Naive thymus-derived CD4-positive, alpha-beta T cell (primary cell): ENCODE measurements at regions of chr1 and their contacts with region 1.

Region 1: GRCh38 chr1:93629099-93630059 is 52.3 kb downstream of the BCAR3 start:
- DNase-seq: peak in 8 of 9 donors; percentile 22 to 69 (median 56)
- ATAC-seq: peak; percentile 89
- H3K4me3 ChIP-seq: no peak overlapping the region
- H3K4me3 Mint-ChIP-seq: no peak overlapping the region
- H3K27ac ChIP-seq: no peak overlapping the region
- H3K27ac Mint-ChIP-seq: no peak overlapping the region
- H3K4me1 ChIP-seq: no peaks in the 10 kb centered on the region
- H3K4me1 Mint-ChIP-seq: no peaks in the 10 kb centered on the region
- H3K27me3 ChIP-seq: no peaks in the 10 kb centered on the region
- H3K27me3 Mint-ChIP-seq: peaks cover 0 to 10% (median 0%) of the 10 kb centered on the region in 5 donors

Region 2: DNA sequence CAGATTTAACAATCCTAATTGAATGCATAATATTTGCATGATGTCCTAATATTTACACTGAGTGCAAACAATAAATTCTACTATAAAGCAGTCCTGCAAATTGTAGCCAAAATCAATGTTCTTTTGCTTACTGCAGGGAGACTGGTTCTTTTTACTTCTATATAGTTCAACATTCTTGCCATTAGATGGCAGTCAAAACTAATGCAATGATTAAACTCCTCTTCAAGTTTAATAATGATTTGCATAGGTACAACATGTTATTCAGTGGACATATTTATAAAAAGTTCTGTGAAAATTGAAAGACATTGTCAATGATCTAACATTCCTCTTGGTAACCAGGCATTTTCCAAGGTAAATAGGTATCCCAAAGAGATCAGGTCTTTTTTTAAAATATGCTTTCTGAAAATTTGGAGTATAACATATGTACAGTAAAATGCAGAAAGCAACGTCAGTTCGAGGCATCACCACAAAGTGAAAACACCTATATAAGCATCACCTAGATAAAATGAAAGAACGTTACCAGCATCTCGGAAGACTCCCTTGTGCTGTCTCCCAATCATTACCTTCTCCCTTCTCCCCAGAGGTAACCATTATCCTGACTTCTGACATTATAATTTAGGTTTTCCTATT is 191.3 kb before region 1 on chr1:
- CTCF ChIA-PET with region 1: interaction called, 3 read pairs
- POLR2A ChIA-PET with region 1: no interaction called
- intact Hi-C with region 1: loop called in 1 of 2 experiments (anchors 1 kb)
- DNase-seq: peak in 5 of 9 donors; percentile 24 to 48 (median 27)
- ATAC-seq: peak; percentile 61
- H3K4me3 ChIP-seq: no peak overlapping the region
- H3K4me3 Mint-ChIP-seq: no peak overlapping the region
- H3K27ac ChIP-seq: no peak overlapping the region
- H3K27ac Mint-ChIP-seq: no peak overlapping the region
- H3K4me1 ChIP-seq: no peaks in the 10 kb centered on the region
- H3K4me1 Mint-ChIP-seq: peaks cover 0 to 2% (median 0%) of the 10 kb centered on the region in 7 donors
- H3K27me3 ChIP-seq: peaks cover 0 to 4% of the 10 kb centered on the region in 2 donors
- H3K27me3 Mint-ChIP-seq: peaks cover 0 to 35% (median 7%) of the 10 kb centered on the region in 5 donors

Region 3: DNA sequence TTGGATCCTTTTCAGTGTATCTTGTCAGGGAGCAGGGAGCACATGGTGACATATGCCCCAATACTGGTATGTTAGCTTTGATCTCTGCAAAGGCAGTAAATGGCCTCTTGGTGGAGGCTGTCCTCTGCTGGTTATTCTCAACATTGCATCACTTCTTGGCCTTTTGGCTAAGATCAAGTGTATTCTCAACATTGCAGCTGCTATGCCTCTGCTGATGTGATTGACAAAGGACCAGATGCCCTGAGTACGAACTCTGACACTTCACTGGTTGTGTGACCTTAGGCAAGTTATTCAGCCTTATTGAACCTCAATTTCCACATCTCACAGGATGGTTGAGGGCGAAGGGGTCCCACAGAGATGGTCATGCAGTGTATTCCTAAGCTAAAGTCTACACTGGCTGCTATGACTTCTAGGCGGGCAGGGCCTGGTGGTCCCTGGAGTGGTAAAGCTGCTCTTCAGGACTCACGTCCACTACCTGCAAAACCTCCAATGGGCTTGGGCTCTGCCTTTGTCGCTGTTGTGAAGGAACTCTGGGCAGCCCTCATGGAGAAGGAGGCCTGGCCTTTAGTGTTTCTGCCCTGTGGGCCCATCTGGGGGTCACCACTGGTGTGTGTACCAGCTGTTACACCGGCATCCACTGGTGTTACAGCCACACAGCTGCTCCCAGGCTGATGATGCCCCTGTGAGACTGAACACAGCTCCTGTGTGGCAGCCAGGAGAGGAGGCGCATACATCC is 184.8 kb after region 1 on chr1:
- CTCF ChIA-PET with region 1: interaction called, 3 read pairs
- POLR2A ChIA-PET with region 1: no interaction called
- intact Hi-C with region 1: loop called (anchors 1 kb)
- DNase-seq: peak in 8 of 9 donors; percentile 18 to 55 (median 36)
- ATAC-seq: peak; percentile 70
- H3K4me3 ChIP-seq: no peak overlapping the region
- H3K4me3 Mint-ChIP-seq: no peak overlapping the region
- H3K27ac ChIP-seq: no peak overlapping the region
- H3K27ac Mint-ChIP-seq: no peak overlapping the region
- H3K4me1 ChIP-seq: peaks cover 0 to 11% of the 10 kb centered on the region in 2 donors
- H3K4me1 Mint-ChIP-seq: peaks cover 19 to 23% (median 21%) of the 10 kb centered on the region in 7 donors
- H3K27me3 ChIP-seq: no peaks in the 10 kb centered on the region
- H3K27me3 Mint-ChIP-seq: peaks cover 0 to 2% (median 0%) of the 10 kb centered on the region in 5 donors

Region 4: GRCh38 chr1:93878889-93879586 is 249.7 kb after region 1 on chr1 and contains the start of gene DNTTIP2:
- CTCF ChIA-PET with region 1: interaction called, 4 read pairs
- POLR2A ChIA-PET with region 1: interaction called, 3 read pairs
- intact Hi-C with region 1: loop called in 1 of 2 experiments (anchors 1 kb)
- DNase-seq: peak; percentile 73 to 89 (median 86)
- ATAC-seq: peak; percentile 90
- H3K4me3 ChIP-seq: peak within 1 kb of the TSS; percentile 83
- H3K4me3 Mint-ChIP-seq: peak within 1 kb of the TSS; percentile 92 to 99 (median 97)
- H3K27ac ChIP-seq: peak within 1 kb of the TSS; percentile 94
- H3K27ac Mint-ChIP-seq: peak within 1 kb of the TSS; percentile 96 to 99 (median 98)
- H3K4me1 ChIP-seq: peaks cover 21 to 25% of the 10 kb centered on the region in 2 donors
- H3K4me1 Mint-ChIP-seq: peaks cover 34 to 62% (median 54%) of the 10 kb centered on the region in 7 donors
- H3K27me3 ChIP-seq: no peaks in the 10 kb centered on the region
- H3K27me3 Mint-ChIP-seq: no peaks in the 10 kb centered on the region
- total RNA-seq, gene DNTTIP2: 51.8 to 84.2 (median 77.5) TPM

Region 5: DNA sequence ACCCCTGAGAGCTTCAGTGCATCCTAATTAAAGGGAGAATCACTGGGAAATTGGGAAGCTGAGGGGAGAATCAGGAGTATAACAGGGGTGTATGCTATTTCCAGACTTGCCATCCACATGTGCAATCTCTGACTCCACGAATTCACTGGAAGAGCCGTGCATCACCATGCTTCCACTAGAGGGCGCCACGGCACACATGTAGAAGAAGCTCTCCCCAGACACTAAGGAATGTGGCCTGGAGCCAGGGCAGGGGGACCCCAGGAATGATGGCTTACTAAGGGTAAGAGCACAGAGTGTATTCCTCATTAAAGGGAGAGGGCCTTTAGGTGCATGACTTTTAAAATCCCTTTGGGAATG is 410.1 kb after region 1 on chr1:
- CTCF ChIA-PET with region 1: no interaction called
- POLR2A ChIA-PET with region 1: no interaction called
- intact Hi-C with region 1: loop called in 1 of 2 experiments (anchors 1 kb)
- DNase-seq: peak in 7 of 9 donors; percentile 10 to 57 (median 29)
- ATAC-seq: peak; percentile 37
- H3K4me3 ChIP-seq: no peak overlapping the region
- H3K4me3 Mint-ChIP-seq: no peak overlapping the region
- H3K27ac ChIP-seq: no peak overlapping the region
- H3K27ac Mint-ChIP-seq: peak overlapping the region in 1 of 9 donors; percentile 1
- H3K4me1 ChIP-seq: no peaks in the 10 kb centered on the region
- H3K4me1 Mint-ChIP-seq: peaks cover 0 to 14% (median 0%) of the 10 kb centered on the region in 7 donors
- H3K27me3 ChIP-seq: no peaks in the 10 kb centered on the region
- H3K27me3 Mint-ChIP-seq: peaks cover 20 to 49% (median 30%) of the 10 kb centered on the region in 5 donors

Region 6: GRCh38 chr1:94335950-94336349 is 706.6 kb after region 1 on chr1:
- CTCF ChIA-PET with region 1: no interaction called
- POLR2A ChIA-PET with region 1: no interaction called
- intact Hi-C with region 1: loop called in 1 of 2 experiments (anchors 2 kb)
- DNase-seq: peak in 4 of 9 donors; percentile 3 to 34 (median 14)
- ATAC-seq: peak; percentile 49
- H3K4me3 ChIP-seq: no peak overlapping the region
- H3K4me3 Mint-ChIP-seq: no peak overlapping the region
- H3K27ac ChIP-seq: no peak overlapping the region
- H3K27ac Mint-ChIP-seq: no peak overlapping the region
- H3K4me1 ChIP-seq: no peaks in the 10 kb centered on the region
- H3K4me1 Mint-ChIP-seq: peaks cover 0 to 3% (median 0%) of the 10 kb centered on the region in 7 donors
- H3K27me3 ChIP-seq: no peaks in the 10 kb centered on the region
- H3K27me3 Mint-ChIP-seq: peaks cover 4 to 21% (median 10%) of the 10 kb centered on the region in 5 donors